Activated naive CD8-positive, alpha-beta T cell treated with anti-CD3 and anti-CD28 coated beads, Interleukin-2, amount 10 ng/mL, durations not matched to agents 7 days and 5 days (primary cell): ENCODE measurements at regions of chr14 and their contacts with region 1.

Region 1: DNA sequence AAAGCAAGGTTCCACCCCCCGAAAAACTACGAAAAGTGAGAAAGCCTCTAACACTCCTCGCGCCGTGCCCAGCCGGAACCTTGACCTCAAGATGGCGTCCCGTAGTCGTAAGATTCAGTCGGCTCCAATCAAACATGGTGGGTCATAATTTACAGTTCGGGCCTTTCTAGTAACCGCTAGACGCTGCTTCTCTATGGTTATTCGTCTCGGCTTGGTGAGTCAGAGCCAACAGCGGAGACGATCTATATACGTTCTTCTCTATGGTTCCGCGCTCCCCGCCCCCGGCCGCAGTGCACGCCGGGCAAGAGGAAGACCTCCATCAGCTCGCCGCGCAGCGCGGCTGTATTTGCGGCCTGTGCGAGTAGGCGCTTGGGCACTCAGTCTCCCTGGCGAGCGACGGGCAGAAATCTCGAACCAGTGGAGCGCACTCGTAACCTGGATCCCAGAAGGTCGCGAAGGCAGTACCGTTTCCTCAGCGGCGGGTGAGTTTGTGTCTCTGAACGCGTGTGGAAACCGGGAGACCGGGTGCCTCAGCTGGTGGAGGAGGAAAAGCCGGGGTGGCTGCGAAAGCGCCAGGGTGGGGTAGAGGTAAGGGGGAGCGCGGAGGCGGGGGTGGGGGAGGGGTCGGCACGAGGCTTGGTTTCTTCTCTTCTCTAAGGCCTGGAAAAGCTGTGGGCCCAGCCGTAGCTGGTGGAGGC is at the start of gene RBM25:
- DNase-seq: peak; percentile 94
- ATAC-seq: peak; percentile 93
- H3K4me3 Mint-ChIP-seq: no peak within 1 kb of the TSS
- H3K27ac Mint-ChIP-seq: no peak within 1 kb of the TSS
- H3K4me1 Mint-ChIP-seq: peaks cover 22% of the 10 kb centered on the region
- H3K27me3 Mint-ChIP-seq: no peaks in the 10 kb centered on the region
- total RNA-seq, gene RBM25: 111 to 116 TPM

Region 2: DNA sequence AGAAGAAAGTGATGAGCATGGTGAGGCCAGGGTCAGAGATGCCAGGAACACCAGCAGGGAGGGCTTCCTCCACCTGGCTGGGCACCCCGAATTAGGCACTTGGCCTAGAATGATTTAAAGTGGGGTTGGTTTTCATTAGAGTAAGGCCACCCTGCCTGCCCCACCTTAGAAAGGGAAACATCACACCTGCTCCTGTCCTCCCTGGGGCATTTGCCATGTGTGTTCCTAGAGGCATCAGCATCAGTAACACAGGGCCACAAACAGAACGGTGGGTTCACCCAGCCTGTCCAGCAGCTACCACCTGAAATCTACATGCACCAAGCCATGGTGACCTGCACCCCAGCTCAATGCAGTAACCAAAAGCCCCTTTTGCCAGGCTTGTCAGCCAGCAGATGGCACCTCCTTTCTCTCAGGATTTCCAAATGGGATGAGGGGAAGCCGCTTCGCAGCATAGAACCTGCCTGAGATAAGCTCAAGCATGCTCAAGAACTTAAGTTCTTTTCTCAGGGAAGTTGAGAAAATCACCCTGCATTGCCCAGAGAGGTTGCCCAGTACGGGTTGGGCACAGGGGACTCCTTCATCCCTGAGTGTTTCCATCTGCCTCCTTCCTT is 503.3 kb before region 1 on chr14:
- POLR2A ChIA-PET with region 1: no interaction called
- DNase-seq: no peak
- ATAC-seq: no peak
- H3K4me3 Mint-ChIP-seq: no peak overlapping the region
- H3K27ac Mint-ChIP-seq: no peak overlapping the region
- H3K4me1 Mint-ChIP-seq: peaks cover 5% of the 10 kb centered on the region
- H3K27me3 Mint-ChIP-seq: peaks cover 54% of the 10 kb centered on the region

Region 3: GRCh38 chr14:73026845-73027542 is 31.4 kb before region 1 on chr14 and contains the start of gene ZFYVE1:
- POLR2A ChIA-PET with region 1: interaction called, 46 read pairs
- DNase-seq: peak; percentile 84
- ATAC-seq: peak; percentile 100
- H3K4me3 Mint-ChIP-seq: peak within 1 kb of the TSS; percentile 98
- H3K27ac Mint-ChIP-seq: peak within 1 kb of the TSS; percentile 90
- H3K4me1 Mint-ChIP-seq: peaks cover 31% of the 10 kb centered on the region
- H3K27me3 Mint-ChIP-seq: no peaks in the 10 kb centered on the region
- total RNA-seq, gene ZFYVE1: 15.2 to 15.5 TPM

Region 4: DNA sequence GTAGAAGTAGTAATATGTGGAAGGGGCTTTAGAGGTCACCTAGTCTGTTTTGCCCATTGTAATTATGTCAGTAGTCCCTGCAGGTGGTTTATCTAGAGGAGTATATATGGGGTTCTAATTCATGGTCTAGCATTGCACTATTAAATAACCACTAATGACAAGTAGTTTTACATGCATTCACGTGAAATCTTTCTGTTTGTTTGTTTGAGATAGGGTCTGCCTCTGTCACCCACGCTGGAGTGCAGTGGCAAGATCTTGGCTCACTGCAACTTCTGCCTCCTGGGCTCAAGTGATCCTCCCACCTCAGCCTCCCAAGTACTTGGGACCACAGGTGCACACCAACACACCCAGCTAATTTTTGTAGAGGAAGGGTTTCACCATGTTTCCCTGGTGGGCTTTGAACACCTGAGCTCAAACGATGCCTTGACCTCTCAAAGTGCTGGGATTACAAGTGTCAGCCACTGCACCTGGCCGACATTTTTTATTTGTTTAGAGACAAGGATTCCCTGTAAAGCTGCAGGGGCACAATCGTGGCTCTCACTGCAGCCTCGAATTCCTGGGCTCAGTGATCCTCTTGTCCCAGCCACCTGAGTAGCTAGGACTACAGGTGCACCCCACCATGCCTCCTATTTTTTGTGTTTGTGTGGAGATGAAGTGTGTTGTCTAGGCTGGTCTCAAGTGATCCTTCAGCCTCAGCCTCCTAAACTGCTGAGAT is 66.0 kb after region 1 on chr14:
- POLR2A ChIA-PET with region 1: no interaction called
- DNase-seq: no peak
- ATAC-seq: no peak
- H3K4me3 Mint-ChIP-seq: no peak overlapping the region
- H3K27ac Mint-ChIP-seq: no peak overlapping the region
- H3K4me1 Mint-ChIP-seq: peaks cover 3% of the 10 kb centered on the region
- H3K27me3 Mint-ChIP-seq: no peaks in the 10 kb centered on the region

Region 5: GRCh38 chr14:73136387-73137225 is 78.2 kb after region 1 on chr14 and contains the start of gene PSEN1:
- POLR2A ChIA-PET with region 1: interaction called, 15 read pairs
- DNase-seq: peak; percentile 99
- ATAC-seq: peak; percentile 93
- H3K4me3 Mint-ChIP-seq: peak within 1 kb of the TSS; percentile 85
- H3K27ac Mint-ChIP-seq: peak within 1 kb of the TSS; percentile 99
- H3K4me1 Mint-ChIP-seq: peaks cover 19% of the 10 kb centered on the region
- H3K27me3 Mint-ChIP-seq: no peaks in the 10 kb centered on the region
- total RNA-seq, gene PSEN1: 38.5 to 43.0 TPM